ENCODE measurements at regions of chr10 and their contacts with region 1.

Region 1: DNA sequence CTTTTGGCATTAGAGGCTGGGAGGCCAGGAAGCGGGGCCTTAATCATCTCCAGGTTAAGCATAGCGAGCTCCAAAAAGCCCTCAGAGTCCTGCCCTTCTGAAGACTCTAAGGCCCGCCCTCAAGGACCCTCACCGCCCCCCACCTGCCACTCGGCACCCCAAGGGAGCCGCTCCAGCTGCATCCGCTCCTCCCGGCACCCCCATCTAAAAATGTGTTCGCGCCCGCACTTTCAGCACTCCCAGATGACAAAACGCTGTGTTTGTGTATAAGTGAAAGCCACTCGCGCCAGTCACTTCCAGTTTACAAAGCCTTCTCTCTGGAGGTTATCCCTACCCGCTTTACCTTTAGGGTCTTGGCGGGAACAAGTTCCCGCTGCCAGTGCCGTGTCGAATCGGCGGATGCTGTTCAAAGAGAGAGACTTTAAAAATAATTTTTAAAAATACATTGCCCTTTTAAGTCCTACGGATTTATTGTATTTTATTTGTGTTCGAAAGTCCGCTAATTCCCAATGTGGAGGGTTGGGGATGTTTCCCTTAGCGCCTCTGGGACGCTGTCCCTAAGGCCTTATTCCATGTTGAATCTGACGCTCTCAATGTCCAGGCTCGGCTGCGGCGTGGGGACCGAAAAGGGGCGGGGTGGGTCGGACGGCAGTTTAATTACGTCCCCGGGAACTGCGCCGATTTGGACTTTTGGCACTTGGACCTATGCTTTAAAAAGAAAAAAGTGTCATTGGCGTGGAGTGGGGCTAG is at the starts of genes DCLRE1A and NHLRC2:
- DNase-seq: peak; percentile 75
- ATAC-seq: peak; percentile 53
- H3K4me3 Mint-ChIP-seq: peak within 1 kb of the TSS; percentile 90
- H3K27ac Mint-ChIP-seq: peak within 1 kb of the TSS; percentile 92
- H3K4me1 Mint-ChIP-seq: peaks cover 46% of the 10 kb centered on the region
- H3K27me3 Mint-ChIP-seq: no peaks in the 10 kb centered on the region
- CTCF ChIP-seq: no peak
- total RNA-seq, gene DCLRE1A: 14.4 to 15.1 TPM
- total RNA-seq, gene NHLRC2: 23.0 to 23.9 TPM

Region 2: DNA sequence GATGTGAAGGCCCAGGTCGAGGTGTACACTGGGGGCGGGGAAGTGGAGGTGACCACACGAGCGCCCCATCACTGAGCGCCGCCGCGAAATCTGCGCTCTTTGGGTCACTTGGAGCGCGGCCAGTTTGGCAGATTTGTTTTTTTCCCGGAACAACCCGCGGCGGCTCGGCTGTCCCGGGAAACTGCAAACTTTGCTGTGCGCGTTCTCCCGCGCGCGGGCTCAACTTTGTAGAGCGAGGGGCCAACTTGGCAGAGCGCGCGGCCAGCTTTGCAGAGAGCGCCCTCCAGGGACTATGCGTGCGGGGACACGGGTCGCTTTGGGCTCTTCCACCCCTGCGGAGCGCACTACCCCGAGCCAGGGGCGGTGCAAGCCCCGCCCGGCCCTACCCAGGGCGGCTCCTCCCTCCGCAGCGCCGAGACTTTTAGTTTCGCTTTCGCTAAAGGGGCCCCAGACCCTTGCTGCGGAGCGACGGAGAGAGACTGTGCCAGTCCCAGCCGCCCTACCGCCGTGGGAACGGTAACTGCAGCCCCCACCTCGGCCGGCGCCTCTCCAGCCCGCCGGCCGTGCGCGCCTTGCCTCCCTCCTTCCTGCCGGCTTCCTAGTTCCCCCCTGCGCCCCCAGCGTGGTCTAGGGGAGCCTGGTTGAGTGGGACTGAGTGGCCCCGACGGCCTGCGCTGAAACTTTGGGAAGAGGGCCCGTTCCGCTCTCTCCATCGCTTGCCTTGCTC is 174.6 kb before region 1 on chr10 and contains the start of gene CASP7:
- CTCF ChIA-PET with region 1: interaction called, 4 read pairs
- POLR2A ChIA-PET with region 1: no interaction called
- intact Hi-C with region 1: loop called (anchors 10 kb)
- DNase-seq: peak; percentile 90
- ATAC-seq: peak; percentile 83
- H3K4me3 Mint-ChIP-seq: peak within 1 kb of the TSS; percentile 91
- H3K27ac Mint-ChIP-seq: peak within 1 kb of the TSS; percentile 92
- H3K4me1 Mint-ChIP-seq: peaks cover 39% of the 10 kb centered on the region
- H3K27me3 Mint-ChIP-seq: no peaks in the 10 kb centered on the region
- CTCF ChIP-seq: no peak
- total RNA-seq, gene CASP7: 23.7 to 24.2 TPM

Region 3: GRCh38 chr10:114043532-114044246 is 189.5 kb after region 1 on chr10 and contains the start of gene ADRB1:
- CTCF ChIA-PET with region 1: no interaction called
- POLR2A ChIA-PET with region 1: interaction called, 3 read pairs
- intact Hi-C with region 1: loop called (anchors 10 kb)
- DNase-seq: peak; percentile 51
- ATAC-seq: peak; percentile 62
- H3K4me3 Mint-ChIP-seq: peak within 1 kb of the TSS; percentile 69
- H3K27ac Mint-ChIP-seq: no peak within 1 kb of the TSS
- H3K4me1 Mint-ChIP-seq: peaks cover 21% of the 10 kb centered on the region
- H3K27me3 Mint-ChIP-seq: peaks cover 59% of the 10 kb centered on the region
- CTCF ChIP-seq: no peak
- total RNA-seq, gene ADRB1: 0.27 to 0.40 TPM

Measured in activated CD8-positive, alpha-beta T cell treated with anti-CD3 and anti-CD28 coated beads for 36 hours (primary cell).